ENCODE measurements at regions of chr4 and their contacts with region 1.

Region 1: GRCh38 chr4:168514249-168514852 is 17.5 kb downstream of the PALLD start:
- DNase-seq: peak; percentile 65
- H3K4me3 ChIP-seq: no peak overlapping the region
- H3K27ac ChIP-seq: no peak overlapping the region
- H3K4me1 ChIP-seq: no peaks in the 10 kb centered on the region
- H3K27me3 ChIP-seq: no peaks in the 10 kb centered on the region
- CTCF ChIP-seq: peak in 1 of 2 donors; percentile 24
- POLR2A ChIP-seq: no peak

Region 2: GRCh38 chr4:168503652-168504362 is 10.5 kb before region 1 on chr4:
- CTCF ChIA-PET with region 1: interaction called, 18 read pairs
- POLR2A ChIA-PET with region 1: no interaction called
- dilution Hi-C with region 1: no loop called
- intact Hi-C with region 1: no loop called
- DNase-seq: peak; percentile 43
- H3K4me3 ChIP-seq: no peak overlapping the region
- H3K27ac ChIP-seq: no peak overlapping the region
- H3K4me1 ChIP-seq: peaks cover 5% of the 10 kb centered on the region
- H3K27me3 ChIP-seq: no peaks in the 10 kb centered on the region
- CTCF ChIP-seq: no peak
- POLR2A ChIP-seq: no peak

Region 3: DNA sequence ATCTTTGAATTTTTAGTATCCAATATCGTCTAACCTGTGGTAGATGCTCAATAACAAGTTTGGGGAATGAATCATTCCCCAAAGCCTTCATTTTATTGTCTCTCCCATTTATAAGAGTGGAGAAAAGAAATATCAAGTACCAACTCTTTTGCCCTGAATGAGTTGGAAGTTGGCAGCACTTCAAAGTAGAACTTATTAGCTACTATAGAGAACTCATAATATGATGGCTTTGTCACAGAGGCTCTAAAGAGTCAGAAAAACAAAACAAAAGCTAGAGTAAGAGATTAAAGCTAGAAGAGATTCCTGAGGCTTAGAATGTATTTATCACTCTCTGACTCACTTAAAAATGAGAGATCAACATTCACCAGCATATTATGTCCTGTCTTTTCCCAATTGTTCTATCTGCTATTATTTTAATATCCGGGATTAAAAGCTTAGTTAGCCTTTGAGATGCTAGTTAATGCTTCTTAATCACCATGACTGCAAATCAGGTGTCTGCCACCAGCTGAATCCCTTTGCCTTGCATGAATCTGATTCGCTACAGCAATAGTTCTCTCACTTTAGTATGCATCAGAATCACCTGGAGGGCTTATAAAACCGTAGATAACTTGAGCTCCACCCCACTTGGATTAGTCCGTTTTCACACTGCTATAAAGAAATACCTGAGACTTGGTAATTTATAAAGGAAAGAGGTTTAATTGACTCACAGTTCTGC is 60.4 kb after region 1 on chr4:
- CTCF ChIA-PET with region 1: interaction called, 10 read pairs
- POLR2A ChIA-PET with region 1: no interaction called
- dilution Hi-C with region 1: no loop called
- intact Hi-C with region 1: no loop called
- DNase-seq: peak; percentile 28
- H3K4me3 ChIP-seq: no peak overlapping the region
- H3K27ac ChIP-seq: no peak overlapping the region
- H3K4me1 ChIP-seq: peaks cover 5% of the 10 kb centered on the region
- H3K27me3 ChIP-seq: no peaks in the 10 kb centered on the region
- CTCF ChIP-seq: no peak
- POLR2A ChIP-seq: no peak

Region 4: GRCh38 chr4:168694648-168695047 is 180.3 kb after region 1 on chr4:
- CTCF ChIA-PET with region 1: no interaction called
- POLR2A ChIA-PET with region 1: no interaction called
- dilution Hi-C with region 1: no loop called
- intact Hi-C with region 1: loop called (anchors 5 kb)
- DNase-seq: peak; percentile 36
- H3K4me3 ChIP-seq: no peak overlapping the region
- H3K27ac ChIP-seq: no peak overlapping the region
- H3K4me1 ChIP-seq: peaks cover 25% of the 10 kb centered on the region
- H3K27me3 ChIP-seq: no peaks in the 10 kb centered on the region
- CTCF ChIP-seq: no peak
- POLR2A ChIP-seq: no peak

Region 5: DNA sequence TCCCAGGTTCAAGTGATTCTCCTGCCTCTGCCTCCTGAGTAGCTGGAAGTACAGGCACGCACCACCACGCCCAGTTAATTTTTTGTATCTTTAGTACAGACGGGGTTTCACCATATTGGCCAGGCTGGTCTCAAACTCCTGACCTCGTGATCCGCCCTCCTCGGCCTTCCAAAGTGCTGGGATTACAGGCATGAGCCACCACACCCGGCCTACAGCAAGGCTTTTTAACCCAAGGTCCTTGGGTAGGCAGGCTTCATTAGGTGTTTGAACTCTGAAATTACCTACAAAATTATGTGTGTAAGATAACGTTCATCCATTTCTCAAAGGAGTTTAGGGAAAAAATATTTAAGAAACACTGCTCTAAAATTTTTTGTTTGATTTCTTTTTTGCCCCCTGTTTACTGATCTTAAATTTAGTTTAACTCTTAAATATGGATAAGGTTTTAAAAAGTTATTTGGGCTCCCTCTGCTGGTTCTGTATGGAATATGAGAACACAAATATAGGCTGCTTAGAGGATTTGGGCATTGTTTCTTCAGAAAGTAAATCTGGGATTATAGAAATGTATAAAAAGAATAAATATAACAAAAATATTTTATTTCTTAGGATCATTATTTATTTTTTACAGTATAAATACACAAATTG is 402.9 kb after region 1 on chr4:
- CTCF ChIA-PET with region 1: interaction called, 53 read pairs
- POLR2A ChIA-PET with region 1: no interaction called
- dilution Hi-C with region 1: loop called (anchors 25 kb)
- intact Hi-C with region 1: loop called (anchors 1 kb)
- DNase-seq: peak; percentile 65
- H3K4me3 ChIP-seq: no peak overlapping the region
- H3K27ac ChIP-seq: no peak overlapping the region
- H3K4me1 ChIP-seq: no peaks in the 10 kb centered on the region
- H3K27me3 ChIP-seq: no peaks in the 10 kb centered on the region
- CTCF ChIP-seq: peak in 1 of 2 donors; percentile 25
- POLR2A ChIP-seq: no peak

Region 6: DNA sequence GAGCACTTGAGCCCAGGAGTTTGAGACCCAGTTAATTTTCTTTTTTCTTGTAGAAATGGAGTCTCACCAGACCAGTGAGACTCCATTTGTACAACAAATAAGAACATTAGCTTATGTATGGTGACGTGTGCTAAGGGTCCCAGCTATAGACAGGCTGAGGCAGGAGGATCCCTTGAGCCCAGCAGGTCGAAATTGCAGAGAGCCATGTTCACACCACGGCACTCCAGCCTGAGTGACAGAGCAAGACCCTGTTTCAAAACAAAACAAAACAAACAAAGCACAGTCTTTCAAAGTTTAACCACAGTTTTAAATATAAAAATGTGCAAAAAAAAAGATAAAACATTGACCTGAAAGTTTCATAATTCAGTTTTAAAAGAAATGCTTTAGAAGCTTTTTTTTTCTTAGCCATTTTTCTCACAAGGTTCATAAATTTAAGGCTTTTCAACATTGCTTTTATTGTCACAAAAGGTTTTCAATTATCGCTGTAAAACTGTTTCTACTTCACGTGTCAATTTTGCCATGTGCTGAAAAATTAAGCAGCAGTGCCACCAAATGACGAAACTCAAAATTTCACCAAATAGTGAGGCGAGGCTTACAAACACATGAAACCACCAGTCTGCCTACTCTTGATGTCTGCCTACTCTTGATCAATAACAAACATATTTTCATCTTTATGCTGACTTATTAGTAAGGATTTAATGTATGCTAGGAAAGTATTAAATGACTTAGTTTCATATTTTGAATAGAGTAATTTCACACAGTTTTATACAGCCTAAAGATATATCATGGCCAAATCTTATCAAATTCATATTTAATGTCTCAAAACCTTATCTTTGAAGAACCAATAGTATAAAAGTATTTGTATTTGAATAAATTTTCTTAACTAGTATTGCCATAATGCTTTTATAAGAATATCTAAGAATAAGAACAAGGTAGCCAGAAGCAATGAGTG is 971.7 kb after region 1 on chr4:
- CTCF ChIA-PET with region 1: interaction called, 3 read pairs
- POLR2A ChIA-PET with region 1: no interaction called
- dilution Hi-C with region 1: no loop called
- intact Hi-C with region 1: loop called (anchors 10 kb)
- DNase-seq: peak; percentile 78
- H3K4me3 ChIP-seq: no peak overlapping the region
- H3K27ac ChIP-seq: no peak overlapping the region
- H3K4me1 ChIP-seq: peaks cover 3% of the 10 kb centered on the region
- H3K27me3 ChIP-seq: no peaks in the 10 kb centered on the region
- CTCF ChIP-seq: peak; percentile 39 to 52
- POLR2A ChIP-seq: no peak

Measured in endothelial cell of umbilical vein (primary cell).